ENCODE measurements at regions of chr3 and their contacts with region 1.

Region 1: DNA sequence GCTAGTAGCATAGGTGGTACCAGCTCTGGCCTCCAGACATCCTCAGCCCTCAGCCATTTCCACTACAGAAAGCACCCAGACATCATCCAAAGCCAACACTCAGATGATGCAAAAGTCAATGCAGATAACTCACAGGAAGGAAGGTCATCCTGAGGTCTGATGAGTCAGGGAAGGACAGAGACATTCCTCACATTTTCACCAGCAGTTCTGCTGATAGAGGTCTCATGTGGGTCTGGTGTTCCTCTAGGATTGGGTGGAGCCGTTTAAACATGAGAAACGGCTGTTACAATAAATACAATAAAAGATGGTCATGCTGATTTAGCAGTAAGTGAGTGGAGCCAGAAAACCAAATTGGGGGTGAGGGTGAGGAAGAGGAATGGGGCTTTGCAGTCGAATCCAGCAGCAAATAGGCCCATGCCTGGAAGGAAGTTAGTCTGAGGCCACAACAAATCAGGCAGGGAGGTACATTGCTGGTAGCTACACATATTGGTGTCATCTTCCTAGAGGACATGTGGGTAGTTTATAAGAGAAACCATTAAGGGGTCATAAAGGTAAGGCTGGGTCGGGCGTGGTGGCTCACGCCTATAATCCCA is 33.3 kb upstream of the FLNB start:
- DNase-seq: peak; percentile 87
- H3K4me3 ChIP-seq: no peak overlapping the region
- H3K27ac ChIP-seq: peak overlapping the region; percentile 92
- H3K27me3 ChIP-seq: no peaks in the 10 kb centered on the region
- CTCF ChIP-seq: no peak

Region 2: GRCh38 chr3:57956833-57957174 is 18.1 kb before region 1 on chr3:
- CTCF ChIA-PET with region 1: no interaction called
- POLR2A ChIA-PET with region 1: interaction called, 13 read pairs
- DNase-seq: no peak
- H3K4me3 ChIP-seq: no peak overlapping the region
- H3K27ac ChIP-seq: peak overlapping the region; percentile 59
- H3K27me3 ChIP-seq: no peaks in the 10 kb centered on the region
- CTCF ChIP-seq: no peak

Measured in AG04450 (cell line).